Activated naive CD4-positive, alpha-beta T cell treated with anti-CD3 and anti-CD28 coated beads for 36 hours (primary cell): ENCODE measurements at regions of chr11 and their contacts with region 1.

Region 1: GRCh38 chr11:5684646-5685362 is at the start of gene TRIM5:
- DNase-seq: peak; percentile 92
- H3K4me3 Mint-ChIP-seq: peak within 1 kb of the TSS; percentile 96
- H3K27ac Mint-ChIP-seq: peak within 1 kb of the TSS; percentile 95
- H3K4me1 Mint-ChIP-seq: peaks cover 42% of the 10 kb centered on the region
- H3K27me3 Mint-ChIP-seq: no peaks in the 10 kb centered on the region
- total RNA-seq, gene TRIM5: 37.2 to 38.0 TPM

Region 2: DNA sequence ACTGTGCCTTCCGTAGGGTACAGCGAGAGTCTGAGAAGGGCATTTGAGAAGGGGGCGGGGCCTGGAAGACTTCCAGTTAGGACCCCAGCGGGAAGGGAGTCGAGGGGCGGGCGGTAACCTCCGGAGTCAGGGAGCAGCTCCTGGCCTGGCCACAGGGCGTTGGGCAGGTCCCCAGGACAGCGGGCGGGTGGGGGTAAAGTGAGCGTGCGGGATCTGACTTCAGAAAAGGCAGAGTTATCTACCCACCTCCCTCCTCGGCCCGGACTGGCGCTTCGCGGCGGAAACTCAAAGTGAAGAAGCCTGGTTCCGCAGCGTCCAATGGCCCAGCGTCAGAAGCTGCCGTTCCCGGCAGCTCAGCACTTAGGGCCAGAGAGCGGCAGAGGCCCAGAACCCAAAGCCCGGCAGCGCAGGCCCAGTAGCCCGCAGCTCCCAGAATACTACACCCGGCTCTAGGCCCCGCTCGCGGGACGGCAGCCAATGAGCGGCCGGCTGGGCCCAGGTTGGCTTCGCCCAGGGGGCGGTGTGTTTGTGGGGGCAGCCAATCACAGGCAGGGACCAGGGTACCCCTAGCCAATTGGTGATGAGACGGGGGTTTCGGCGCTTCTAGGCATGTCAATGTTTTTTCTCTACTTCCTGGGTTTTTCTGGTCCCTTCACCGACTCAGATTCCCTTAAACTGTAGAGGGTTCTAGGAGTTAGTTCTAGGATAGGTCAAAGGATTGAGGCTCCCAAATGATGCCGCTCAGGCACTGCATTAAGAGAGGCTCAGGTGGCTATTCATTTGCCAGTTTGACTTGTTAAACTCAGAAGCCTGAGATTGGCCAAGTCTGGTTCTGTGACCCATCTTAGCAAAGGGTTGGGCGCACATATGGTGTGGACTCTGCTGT is 1076.8 kb before region 1 on chr11 and contains the start of gene TRIM68:
- CTCF ChIA-PET with region 1: no interaction called
- intact Hi-C with region 1: loop called (anchors 5 kb)
- DNase-seq: peak; percentile 97
- H3K4me3 Mint-ChIP-seq: peak within 1 kb of the TSS; percentile 94
- H3K27ac Mint-ChIP-seq: peak within 1 kb of the TSS; percentile 88
- H3K4me1 Mint-ChIP-seq: peaks cover 45% of the 10 kb centered on the region
- H3K27me3 Mint-ChIP-seq: no peaks in the 10 kb centered on the region
- total RNA-seq, gene TRIM68: 11.3 to 15.4 TPM

Region 3: DNA sequence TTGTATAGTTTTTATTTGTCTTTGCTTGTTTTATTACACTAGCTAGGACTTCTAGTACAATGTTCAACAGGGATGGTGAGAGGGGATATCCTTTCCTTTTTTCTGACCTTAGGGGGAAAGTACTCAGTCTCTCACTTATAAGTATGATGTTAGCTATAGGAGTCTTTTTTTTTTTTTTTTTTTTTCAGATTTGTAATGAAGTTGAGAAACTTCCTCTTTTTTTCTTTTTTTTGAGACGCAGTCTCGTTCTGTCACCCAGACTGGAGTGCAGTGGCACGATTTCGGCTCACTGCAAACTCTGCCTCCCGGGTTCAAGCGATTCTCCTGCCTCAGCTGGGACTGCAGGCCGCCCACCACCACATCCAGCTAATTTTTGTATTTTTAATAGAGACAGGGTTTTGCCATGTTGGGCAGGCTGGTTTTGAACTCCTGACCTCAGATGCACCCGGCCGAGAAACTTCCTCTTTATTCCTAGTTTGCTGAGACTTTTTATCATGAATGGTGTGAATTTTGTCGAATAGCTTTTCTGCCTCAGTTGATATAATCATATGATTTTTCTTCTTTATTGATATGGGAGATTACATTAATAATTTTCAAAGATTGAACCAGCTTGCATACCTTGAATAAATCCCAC is 15.7 kb after region 1 on chr11:
- CTCF ChIA-PET with region 1: interaction called, 6 read pairs
- intact Hi-C with region 1: loop called (anchors 2 kb)
- DNase-seq: no peak
- H3K4me3 Mint-ChIP-seq: no peak overlapping the region
- H3K27ac Mint-ChIP-seq: peak overlapping the region; percentile 68
- H3K4me1 Mint-ChIP-seq: peaks cover 66% of the 10 kb centered on the region
- H3K27me3 Mint-ChIP-seq: no peaks in the 10 kb centered on the region

Region 4: GRCh38 chr11:5767056-5767455 is 82.3 kb after region 1 on chr11:
- CTCF ChIA-PET with region 1: no interaction called
- intact Hi-C with region 1: no loop called
- DNase-seq: no peak
- H3K4me3 Mint-ChIP-seq: no peak overlapping the region
- H3K27ac Mint-ChIP-seq: no peak overlapping the region
- H3K4me1 Mint-ChIP-seq: no peaks in the 10 kb centered on the region
- H3K27me3 Mint-ChIP-seq: peaks cover 2% of the 10 kb centered on the region

Region 5: GRCh38 chr11:5891216-5891800 is 206.5 kb after region 1 on chr11:
- CTCF ChIA-PET with region 1: interaction called, 5 read pairs
- intact Hi-C with region 1: loop called (anchors 1 kb)
- DNase-seq: no peak
- H3K4me3 Mint-ChIP-seq: no peak overlapping the region
- H3K27ac Mint-ChIP-seq: no peak overlapping the region
- H3K4me1 Mint-ChIP-seq: no peaks in the 10 kb centered on the region
- H3K27me3 Mint-ChIP-seq: peaks cover 4% of the 10 kb centered on the region

Region 6: GRCh38 chr11:6481012-6481923 is 796.5 kb after region 1 on chr11 and contains the starts of genes ARFIP2 and TIMM10B:
- CTCF ChIA-PET with region 1: no interaction called
- intact Hi-C with region 1: loop called (anchors 2 kb)
- DNase-seq: peak; percentile 99
- H3K4me3 Mint-ChIP-seq: peak within 1 kb of the TSS; percentile 94
- H3K27ac Mint-ChIP-seq: peak within 1 kb of the TSS; percentile 96
- H3K4me1 Mint-ChIP-seq: peaks cover 38% of the 10 kb centered on the region
- H3K27me3 Mint-ChIP-seq: no peaks in the 10 kb centered on the region
- total RNA-seq, gene ARFIP2: 33.5 to 37.9 TPM
- total RNA-seq, gene TIMM10B: 35.1 to 41.7 TPM